ENCODE measurements at regions of chr6 and their contacts with region 1.

Region 1: DNA sequence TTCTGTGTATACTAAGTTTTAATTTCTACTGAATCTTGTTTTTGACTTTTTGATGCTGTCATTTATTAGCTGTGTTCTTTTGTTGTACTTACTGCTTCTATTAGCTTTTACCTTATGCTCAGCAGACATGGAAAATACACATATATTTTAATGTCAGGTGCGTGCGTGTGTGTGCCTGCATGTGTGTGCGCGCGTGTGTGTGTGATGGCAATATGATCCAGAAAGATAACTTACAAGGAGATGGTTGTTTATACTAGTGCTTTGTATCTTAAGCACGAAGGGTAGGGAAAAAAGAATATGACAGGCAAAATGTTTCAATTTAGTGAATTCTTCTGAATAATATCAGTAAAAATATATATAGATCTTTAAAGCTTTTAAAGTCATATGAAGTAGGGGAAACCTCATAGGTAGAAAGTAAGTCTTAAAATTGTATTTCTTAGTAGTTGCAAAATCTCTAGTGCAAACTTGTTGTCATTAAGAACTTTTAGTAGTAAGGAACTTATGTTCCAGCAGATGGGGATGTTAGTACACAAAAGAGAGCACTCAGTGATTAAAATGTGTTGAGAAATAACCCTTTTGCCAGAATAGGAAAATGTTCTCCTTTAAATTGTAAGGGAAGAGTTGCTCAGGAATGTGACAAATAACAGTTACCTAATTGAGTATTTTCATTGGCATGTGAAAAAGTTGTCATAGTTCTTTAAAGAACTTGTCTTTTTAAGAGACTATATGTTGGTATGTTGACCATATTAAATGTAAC is 13.2 kb downstream of the QKI start:
- DNase-seq: no peak
- ATAC-seq: peak in 5 of 8 donors; percentile 38 to 54 (median 41)
- H3K4me3 ChIP-seq: peak overlapping the region in 2 of 10 donors; percentile 9 to 12
- H3K27ac ChIP-seq: peak overlapping the region in 5 of 10 donors; percentile 1 to 36 (median 8)
- H3K4me1 ChIP-seq: peaks cover 3 to 100% (median 99%) of the 10 kb centered on the region in 9 donors
- H3K27me3 ChIP-seq: no peaks in the 10 kb centered on the region
- CTCF ChIP-seq: peak; percentile 9 to 65 (median 44)

Region 2: DNA sequence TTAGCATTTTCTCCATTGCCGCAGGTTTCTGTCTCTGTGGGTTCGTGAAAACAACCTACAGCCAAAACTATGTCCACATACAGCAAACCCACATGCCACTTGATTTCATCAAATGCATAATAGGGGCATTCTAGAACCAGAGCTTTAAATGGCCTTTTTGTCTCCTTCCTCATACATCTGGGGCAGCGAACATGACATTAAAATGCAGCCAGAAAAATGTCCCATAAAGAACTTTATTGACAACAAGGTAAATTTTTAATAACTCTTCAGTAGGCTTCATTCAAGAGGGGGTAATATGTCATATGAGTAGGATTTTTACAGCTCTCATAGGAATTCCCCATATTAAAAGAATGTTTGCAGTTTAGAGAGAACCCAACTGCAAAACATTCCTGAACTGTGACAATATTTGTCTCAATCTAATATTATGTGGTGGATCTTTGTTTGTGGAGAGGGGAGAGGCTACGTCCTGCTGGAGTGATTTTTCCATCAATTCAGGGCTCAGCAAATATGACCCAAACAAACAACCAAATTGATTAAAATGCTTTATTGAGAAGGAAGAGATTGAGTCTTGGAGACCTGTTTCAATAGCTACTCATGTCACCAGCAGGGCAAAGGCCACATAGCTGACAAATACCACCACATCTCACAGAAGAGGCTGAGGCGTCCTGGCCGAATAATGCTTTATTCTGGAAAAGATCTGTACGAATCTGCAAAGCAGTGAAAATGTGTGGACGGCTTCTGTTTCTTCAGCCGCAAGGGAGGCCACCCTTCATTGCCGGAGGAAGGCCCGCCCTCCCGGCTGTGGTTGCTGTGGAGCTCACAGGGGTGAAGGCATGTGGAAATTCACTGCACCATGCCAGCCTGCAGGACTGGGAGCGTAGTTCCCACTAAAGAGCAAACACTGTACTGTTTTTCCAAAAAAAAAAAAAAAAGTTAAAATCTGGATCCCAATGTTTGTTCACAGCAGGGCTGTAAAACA is 103.0 kb before region 1 on chr6:
- intact Hi-C with region 1: no loop called
- DNase-seq: peak in 1 of 2 donors; percentile 51
- ATAC-seq: peak in 7 of 8 donors; percentile 39 to 75 (median 53)
- H3K4me3 ChIP-seq: no peak overlapping the region
- H3K27ac ChIP-seq: peak overlapping the region in 2 of 10 donors; percentile 8 to 29
- H3K4me1 ChIP-seq: peaks cover 0 to 38% (median 33%) of the 10 kb centered on the region in 9 donors
- H3K27me3 ChIP-seq: no peaks in the 10 kb centered on the region
- CTCF ChIP-seq: no peak

Region 3: GRCh38 chr6:163565140-163565539 is 137.5 kb after region 1 on chr6:
- intact Hi-C with region 1: loop called in 6 of 10 experiments (anchors 5 to 10 kb)
- DNase-seq: no peak
- ATAC-seq: peak in 5 of 8 donors; percentile 48 to 70 (median 64)
- H3K4me3 ChIP-seq: no peak overlapping the region
- H3K27ac ChIP-seq: peak overlapping the region in 3 of 10 donors; percentile 5 to 40 (median 26)
- H3K4me1 ChIP-seq: peaks cover 0 to 75% (median 61%) of the 10 kb centered on the region in 9 donors
- H3K27me3 ChIP-seq: no peaks in the 10 kb centered on the region
- CTCF ChIP-seq: no peak

Region 4: GRCh38 chr6:163579880-163580295 is 152.2 kb after region 1 on chr6:
- intact Hi-C with region 1: loop called in 2 of 10 experiments (anchors 10 kb)
- DNase-seq: no peak
- ATAC-seq: peak in 5 of 8 donors; percentile 30 to 46 (median 35)
- H3K4me3 ChIP-seq: no peak overlapping the region
- H3K27ac ChIP-seq: peak overlapping the region in 7 of 10 donors; percentile 3 to 51 (median 25)
- H3K4me1 ChIP-seq: peaks cover 0 to 48% (median 17%) of the 10 kb centered on the region in 9 donors
- H3K27me3 ChIP-seq: no peaks in the 10 kb centered on the region
- CTCF ChIP-seq: peak in 3 of 9 donors; percentile 37 to 47 (median 41)

Region 5: DNA sequence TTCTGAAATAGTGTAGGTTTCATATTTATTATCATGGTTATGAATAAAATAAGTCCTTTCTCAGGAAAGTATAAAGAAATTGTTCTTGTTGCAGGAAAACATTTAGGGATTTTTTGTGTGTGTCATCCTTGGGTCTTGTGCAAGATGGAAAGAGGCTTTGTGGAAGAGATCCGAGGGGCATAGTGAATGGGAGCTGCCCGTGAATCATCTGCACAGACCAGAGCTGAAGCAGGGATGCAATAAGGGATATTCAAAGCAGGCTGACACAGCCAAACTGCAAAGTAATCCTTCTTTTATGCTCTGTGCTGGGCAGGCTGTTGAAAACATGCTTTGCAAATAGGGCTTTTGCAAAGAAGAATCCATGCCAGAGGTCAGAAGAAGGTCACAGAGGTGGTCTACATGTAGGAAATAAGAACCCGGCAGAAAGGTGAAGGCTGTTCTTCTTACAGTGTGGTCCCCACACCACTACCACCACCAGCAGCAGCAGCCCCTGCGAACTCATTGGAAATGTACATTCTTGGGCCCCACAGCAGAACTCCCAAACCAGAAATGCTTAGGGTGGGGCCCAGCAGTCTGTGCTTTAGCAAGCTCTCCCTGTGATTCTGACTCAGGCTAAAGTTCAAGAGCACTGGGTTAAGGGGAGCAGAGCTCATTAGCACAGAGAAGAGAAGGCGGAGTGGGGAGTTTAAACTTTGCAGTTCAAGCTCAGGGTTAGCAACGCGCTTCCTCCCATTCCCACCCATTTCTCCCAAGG is 224.4 kb after region 1 on chr6:
- intact Hi-C with region 1: no loop called
- DNase-seq: no peak
- ATAC-seq: peak in 1 of 8 donors; percentile 51
- H3K4me3 ChIP-seq: no peak overlapping the region
- H3K27ac ChIP-seq: no peak overlapping the region
- H3K4me1 ChIP-seq: peaks cover 0 to 4% (median 0%) of the 10 kb centered on the region in 9 donors
- H3K27me3 ChIP-seq: no peaks in the 10 kb centered on the region
- CTCF ChIP-seq: no peak

Region 6: GRCh38 chr6:163725008-163725941 is 297.6 kb after region 1 on chr6:
- intact Hi-C with region 1: loop called in 1 of 10 experiments (anchors 10 kb)
- DNase-seq: no peak
- ATAC-seq: no peak
- H3K4me3 ChIP-seq: no peak overlapping the region
- H3K27ac ChIP-seq: no peak overlapping the region
- H3K4me1 ChIP-seq: no peaks in the 10 kb centered on the region
- H3K27me3 ChIP-seq: no peaks in the 10 kb centered on the region
- CTCF ChIP-seq: no peak

Region 7: DNA sequence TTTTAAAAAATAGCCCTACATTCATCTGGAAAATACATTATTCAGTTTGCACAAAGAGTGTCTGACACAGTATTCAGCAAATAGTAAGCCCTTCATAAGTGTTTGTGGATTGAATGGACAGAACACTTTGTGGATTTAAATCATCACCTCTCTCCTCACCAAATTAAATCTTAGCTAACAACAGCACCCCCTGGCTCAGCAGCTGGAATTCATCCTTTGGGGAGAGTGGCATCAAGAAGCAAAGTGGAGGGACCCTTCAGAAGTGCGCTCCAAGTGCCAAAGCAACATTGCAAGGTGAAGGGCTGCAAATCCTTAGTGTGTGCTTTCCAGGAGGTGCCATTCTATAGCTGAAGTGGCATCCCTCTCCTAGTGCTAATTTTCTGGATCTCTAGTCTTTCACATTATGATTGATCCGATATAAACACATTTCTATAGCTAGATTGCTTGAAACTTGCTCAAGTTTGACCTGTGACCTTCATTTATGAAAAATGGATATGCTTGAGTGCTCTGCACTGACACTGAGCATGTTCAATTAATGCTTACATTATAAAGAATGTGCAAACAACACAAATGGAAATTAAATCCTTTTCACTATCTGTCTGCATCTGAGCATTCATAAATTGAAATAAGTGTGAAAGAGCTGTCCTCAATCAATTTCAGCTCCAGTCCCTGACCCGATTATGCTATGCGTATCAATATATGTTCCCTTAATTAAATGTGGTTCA is 990.0 kb after region 1 on chr6:
- intact Hi-C with region 1: loop called in 2 of 10 experiments (anchors 10 kb)
- DNase-seq: no peak
- ATAC-seq: no peak
- H3K4me3 ChIP-seq: no peak overlapping the region
- H3K27ac ChIP-seq: no peak overlapping the region
- H3K4me1 ChIP-seq: peaks cover 0 to 29% (median 9%) of the 10 kb centered on the region in 9 donors
- H3K27me3 ChIP-seq: no peaks in the 10 kb centered on the region
- CTCF ChIP-seq: peak in 3 of 9 donors; percentile 6 to 33 (median 18)